ENCODE measurements at regions of chr1 and their contacts with region 1.

Region 1: DNA sequence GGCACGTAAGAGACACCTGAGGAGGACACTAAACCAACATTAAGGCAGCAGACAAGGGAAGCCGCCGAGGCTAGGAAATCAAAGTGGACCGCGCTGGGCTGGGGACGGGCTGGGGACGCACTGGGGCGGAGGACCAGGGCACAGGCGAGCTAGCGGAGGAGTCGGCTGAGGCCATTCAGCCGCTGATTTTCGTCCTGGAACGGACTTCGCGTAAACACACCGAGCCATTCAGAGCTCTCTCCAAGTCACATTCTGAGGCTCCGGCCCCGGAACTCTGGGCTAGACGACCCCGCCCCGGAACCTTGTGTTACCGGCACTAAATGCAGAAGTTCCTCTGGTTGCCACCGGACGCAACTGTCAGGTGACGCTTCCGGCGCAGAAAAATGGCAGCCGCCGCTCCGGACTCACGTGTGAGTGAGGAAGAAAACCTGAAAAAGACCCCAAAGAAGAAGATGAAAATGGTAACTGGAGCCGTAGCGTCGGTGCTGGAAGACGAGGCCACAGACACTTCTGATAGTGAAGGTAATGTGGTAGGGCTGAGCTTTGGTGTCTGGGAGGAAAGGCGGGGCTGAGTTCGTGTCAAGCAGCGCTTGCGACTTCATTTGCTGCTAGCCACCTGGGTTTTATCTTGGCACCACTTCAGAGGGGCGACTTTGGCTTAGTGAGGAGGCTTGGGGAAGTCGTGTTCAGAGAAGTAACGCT is at the start of gene RRP15:
- DNase-seq: peak; percentile 93
- ATAC-seq: peak; percentile 99
- H3K4me3 Mint-ChIP-seq: peak within 1 kb of the TSS; percentile 94
- H3K27ac Mint-ChIP-seq: peak within 1 kb of the TSS; percentile 91
- H3K4me1 Mint-ChIP-seq: peaks cover 32% of the 10 kb centered on the region
- H3K27me3 Mint-ChIP-seq: peaks cover 10% of the 10 kb centered on the region
- total RNA-seq, gene RRP15: 23.3 to 30.5 TPM

Region 2: GRCh38 chr1:217482356-217483102 is 802.6 kb before region 1 on chr1:
- CTCF ChIA-PET with region 1: no interaction called
- POLR2A ChIA-PET with region 1: no interaction called
- intact Hi-C with region 1: loop called in 1 of 2 experiments (anchors 10 kb)
- DNase-seq: peak; percentile 83
- ATAC-seq: peak; percentile 100
- H3K4me3 Mint-ChIP-seq: no peak overlapping the region
- H3K27ac Mint-ChIP-seq: peak overlapping the region; percentile 74
- H3K4me1 Mint-ChIP-seq: peaks cover 25% of the 10 kb centered on the region
- H3K27me3 Mint-ChIP-seq: no peaks in the 10 kb centered on the region

Region 3: GRCh38 chr1:217630711-217631591 is 654.1 kb before region 1 on chr1 and contains the starts of genes GPATCH2 and SPATA17:
- CTCF ChIA-PET with region 1: no interaction called
- POLR2A ChIA-PET with region 1: no interaction called
- intact Hi-C with region 1: loop called in 1 of 2 experiments (anchors 1 kb)
- DNase-seq: peak; percentile 85
- ATAC-seq: peak; percentile 89
- H3K4me3 Mint-ChIP-seq: peak within 1 kb of the TSS; percentile 87
- H3K27ac Mint-ChIP-seq: peak within 1 kb of the TSS; percentile 100
- H3K4me1 Mint-ChIP-seq: peaks cover 34% of the 10 kb centered on the region
- H3K27me3 Mint-ChIP-seq: no peaks in the 10 kb centered on the region
- total RNA-seq, gene GPATCH2: 6.4 to 7.2 TPM
- total RNA-seq, gene SPATA17: 0.14 TPM in 1 of 2 experiments, not detected in the other

Region 4: DNA sequence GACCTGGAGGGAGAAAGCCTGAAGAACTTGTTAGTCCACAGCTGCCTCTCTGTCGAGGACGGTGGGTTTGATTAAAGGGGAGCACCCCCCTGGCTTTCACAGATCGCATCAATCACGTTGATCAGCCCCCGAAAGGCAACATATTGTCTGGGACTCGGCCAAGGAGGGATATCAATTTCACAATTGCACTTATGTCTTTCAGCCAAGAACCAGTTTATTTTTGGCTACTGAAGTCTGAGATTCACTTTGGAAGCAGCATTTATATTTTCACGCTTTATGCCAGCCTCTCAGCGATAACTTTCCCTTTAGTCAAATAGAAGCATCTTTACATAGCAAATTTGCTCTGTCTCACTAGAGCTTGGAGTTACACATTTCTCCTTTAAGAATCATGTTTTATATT is 253.2 kb before region 1 on chr1:
- CTCF ChIA-PET with region 1: no interaction called
- POLR2A ChIA-PET with region 1: no interaction called
- intact Hi-C with region 1: no loop called
- DNase-seq: no peak
- ATAC-seq: no peak
- H3K4me3 Mint-ChIP-seq: no peak overlapping the region
- H3K27ac Mint-ChIP-seq: no peak overlapping the region
- H3K4me1 Mint-ChIP-seq: no peaks in the 10 kb centered on the region
- H3K27me3 Mint-ChIP-seq: no peaks in the 10 kb centered on the region

Region 5: DNA sequence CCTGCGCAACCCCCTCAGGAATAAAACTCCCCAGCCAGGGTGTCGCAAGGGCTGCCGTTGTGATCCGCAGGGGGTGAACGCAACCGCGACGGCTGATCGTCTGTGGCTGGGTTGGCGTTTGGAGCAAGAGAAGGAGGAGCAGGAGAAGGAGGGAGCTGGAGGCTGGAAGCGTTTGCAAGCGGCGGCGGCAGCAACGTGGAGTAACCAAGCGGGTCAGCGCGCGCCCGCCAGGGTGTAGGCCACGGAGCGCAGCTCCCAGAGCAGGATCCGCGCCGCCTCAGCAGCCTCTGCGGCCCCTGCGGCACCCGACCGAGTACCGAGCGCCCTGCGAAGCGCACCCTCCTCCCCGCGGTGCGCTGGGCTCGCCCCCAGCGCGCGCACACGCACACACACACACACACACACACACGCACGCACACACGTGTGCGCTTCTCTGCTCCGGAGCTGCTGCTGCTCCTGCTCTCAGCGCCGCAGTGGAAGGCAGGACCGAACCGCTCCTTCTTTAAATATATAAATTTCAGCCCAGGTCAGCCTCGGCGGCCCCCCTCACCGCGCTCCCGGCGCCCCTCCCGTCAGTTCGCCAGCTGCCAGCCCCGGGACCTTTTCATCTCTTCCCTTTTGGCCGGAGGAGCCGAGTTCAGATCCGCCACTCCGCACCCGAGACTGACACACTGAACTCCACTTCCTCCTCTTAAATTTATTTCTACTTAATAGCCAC is 60.7 kb after region 1 on chr1:
- CTCF ChIA-PET with region 1: no interaction called
- POLR2A ChIA-PET with region 1: no interaction called
- intact Hi-C with region 1: no loop called
- DNase-seq: peak; percentile 59
- ATAC-seq: peak; percentile 74
- H3K4me3 Mint-ChIP-seq: no peak overlapping the region
- H3K27ac Mint-ChIP-seq: no peak overlapping the region
- H3K4me1 Mint-ChIP-seq: peaks cover 21% of the 10 kb centered on the region
- H3K27me3 Mint-ChIP-seq: peaks cover 48% of the 10 kb centered on the region

Region 6: DNA sequence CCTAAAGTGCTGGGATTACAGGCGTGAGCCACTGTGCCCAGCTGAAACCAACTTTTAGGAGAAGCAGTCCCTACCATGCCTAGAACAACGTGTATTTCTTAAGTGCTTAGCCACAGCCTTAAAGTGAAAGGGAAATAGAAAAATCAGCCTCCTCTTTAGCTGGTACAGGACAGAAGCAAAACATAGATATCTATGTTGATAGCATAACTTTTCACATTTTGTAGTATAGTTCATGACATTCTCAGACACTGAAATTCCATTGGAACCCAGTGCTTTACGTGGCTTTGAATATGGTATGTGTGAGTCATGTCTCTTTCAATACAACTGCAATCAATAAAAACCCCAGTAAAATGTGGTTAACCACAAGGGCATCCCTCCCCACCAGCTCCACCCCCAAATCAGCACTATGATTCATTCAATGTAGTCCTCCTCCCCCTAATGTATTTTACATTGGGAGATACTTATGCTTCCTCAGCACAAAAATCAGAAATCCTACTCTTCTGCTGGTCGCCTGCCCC is 92.1 kb after region 1 on chr1:
- CTCF ChIA-PET with region 1: no interaction called
- POLR2A ChIA-PET with region 1: no interaction called
- intact Hi-C with region 1: loop called in 1 of 2 experiments (anchors 1 kb)
- DNase-seq: peak; percentile 77
- ATAC-seq: peak; percentile 94
- H3K4me3 Mint-ChIP-seq: no peak overlapping the region
- H3K27ac Mint-ChIP-seq: peak overlapping the region; percentile 31
- H3K4me1 Mint-ChIP-seq: peaks cover 8% of the 10 kb centered on the region
- H3K27me3 Mint-ChIP-seq: peaks cover 54% of the 10 kb centered on the region

Region 7: GRCh38 chr1:218917656-218918055 is 632.6 kb after region 1 on chr1:
- CTCF ChIA-PET with region 1: no interaction called
- POLR2A ChIA-PET with region 1: no interaction called
- intact Hi-C with region 1: no loop called
- DNase-seq: no peak
- ATAC-seq: no peak
- H3K4me3 Mint-ChIP-seq: no peak overlapping the region
- H3K27ac Mint-ChIP-seq: no peak overlapping the region
- H3K4me1 Mint-ChIP-seq: no peaks in the 10 kb centered on the region
- H3K27me3 Mint-ChIP-seq: peaks cover 2% of the 10 kb centered on the region

Region 8: GRCh38 chr1:220089650-220090556 is 1804.8 kb after region 1 on chr1 and contains the start of gene BPNT1:
- CTCF ChIA-PET with region 1: no interaction called
- POLR2A ChIA-PET with region 1: no interaction called
- intact Hi-C with region 1: loop called in 1 of 2 experiments (anchors 5 kb)
- DNase-seq: peak; percentile 98
- ATAC-seq: peak; percentile 81
- H3K4me3 Mint-ChIP-seq: peak within 1 kb of the TSS; percentile 87
- H3K27ac Mint-ChIP-seq: peak within 1 kb of the TSS; percentile 89
- H3K4me1 Mint-ChIP-seq: peaks cover 10% of the 10 kb centered on the region
- H3K27me3 Mint-ChIP-seq: no peaks in the 10 kb centered on the region
- total RNA-seq, gene BPNT1: 24.5 to 26.9 TPM

Measured in activated CD4-positive, alpha-beta T cell treated with anti-CD3 and anti-CD28 coated beads for 36 hours (primary cell).